GM13977 (cell line): ENCODE measurements at regions of chr5 and their contacts with region 1.

Region 1: DNA sequence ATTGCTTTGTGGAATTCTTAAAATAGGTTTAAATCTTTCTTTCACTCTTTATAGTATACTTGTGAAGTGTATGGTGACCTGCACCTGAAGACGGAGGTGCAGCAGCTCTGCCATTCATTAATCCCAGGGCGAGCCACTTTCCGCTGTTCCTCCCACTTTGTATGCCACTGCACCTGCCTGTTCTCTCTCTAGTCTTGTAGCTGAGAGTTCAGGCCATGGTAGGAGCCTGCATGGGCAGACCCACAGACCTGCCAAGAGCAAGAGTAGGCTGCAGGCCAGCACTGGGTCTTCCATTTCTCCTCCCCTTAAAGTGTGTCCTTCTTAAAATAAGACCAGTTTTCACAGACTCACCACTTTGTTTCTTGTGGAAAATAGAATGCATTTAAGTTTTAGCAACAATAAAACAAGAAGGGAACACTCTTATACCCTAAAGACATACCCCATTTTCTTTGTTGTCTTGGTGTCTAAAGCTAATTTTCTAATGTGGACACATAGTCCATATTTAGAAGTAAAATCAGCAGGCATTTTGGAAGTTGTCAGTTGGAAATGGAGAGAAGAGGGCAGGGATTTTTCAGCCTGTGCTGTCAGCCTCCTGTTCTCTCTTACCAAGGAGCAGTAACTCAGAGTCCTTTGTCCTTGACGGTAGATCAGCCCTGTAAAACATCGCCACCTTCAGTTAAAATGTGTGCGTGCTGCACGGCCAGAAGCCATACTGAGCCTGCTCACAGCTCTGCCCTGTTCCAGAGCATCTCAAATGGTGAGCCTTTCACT is 103.2 kb downstream of the SNCAIP start:
- DNase-seq: peak; percentile 35
- CTCF ChIP-seq: peak; percentile 87

Region 2: GRCh38 chr5:122153230-122153629 is 262.0 kb before region 1 on chr5:
- in situ Hi-C with region 1: no loop called
- DNase-seq: no peak
- CTCF ChIP-seq: no peak

Region 3: DNA sequence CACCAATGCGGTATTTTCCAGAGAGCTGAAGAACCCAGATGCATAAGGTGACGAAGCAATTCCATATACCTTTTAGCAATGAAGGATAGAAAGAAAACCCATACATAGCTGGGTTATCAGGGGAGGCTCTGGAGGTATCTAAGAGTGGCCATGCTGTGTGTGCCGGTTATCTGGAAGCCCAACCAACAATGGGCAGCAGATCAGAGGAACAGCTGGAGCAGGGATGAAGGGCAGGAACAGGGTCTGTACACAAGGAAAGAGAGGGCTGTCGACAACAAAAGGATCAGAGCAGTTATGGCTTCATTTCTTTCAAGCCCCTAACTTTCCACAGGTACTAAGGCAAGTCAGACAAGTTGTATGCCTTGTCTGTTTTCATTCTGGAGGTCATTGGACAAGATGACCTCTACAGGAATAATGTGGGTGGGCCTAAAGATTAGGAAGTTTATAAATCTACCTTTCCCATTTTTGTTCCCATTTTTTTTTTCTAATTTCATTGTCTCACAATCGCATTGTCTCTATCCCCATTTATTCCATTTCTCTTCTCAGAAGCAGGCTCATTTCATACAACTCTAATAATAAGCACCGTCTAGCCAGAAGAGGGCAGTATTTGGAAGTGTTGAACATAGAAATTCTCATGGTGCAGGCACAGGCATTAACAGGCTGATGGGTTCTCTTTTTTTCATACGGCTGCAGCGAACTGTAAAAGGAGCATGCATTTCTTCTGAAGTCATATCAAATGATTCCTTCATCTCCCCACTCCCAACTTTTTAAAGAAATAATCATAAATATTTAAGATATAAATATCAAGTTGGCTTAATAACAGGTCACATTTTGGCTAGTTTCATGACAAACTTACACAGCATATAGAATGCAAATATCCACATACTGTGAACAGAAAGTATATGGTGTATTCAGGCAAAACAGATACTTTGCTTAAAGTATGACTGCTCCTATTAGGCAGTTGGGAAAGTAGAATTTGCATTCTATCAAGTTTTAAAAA is 222.4 kb before region 1 on chr5:
- in situ Hi-C with region 1: loop called (anchors 10 kb)
- DNase-seq: peak; percentile 34
- CTCF ChIP-seq: peak; percentile 76